ENCODE measurements at regions of chr3 and their contacts with region 1.

Region 1: DNA sequence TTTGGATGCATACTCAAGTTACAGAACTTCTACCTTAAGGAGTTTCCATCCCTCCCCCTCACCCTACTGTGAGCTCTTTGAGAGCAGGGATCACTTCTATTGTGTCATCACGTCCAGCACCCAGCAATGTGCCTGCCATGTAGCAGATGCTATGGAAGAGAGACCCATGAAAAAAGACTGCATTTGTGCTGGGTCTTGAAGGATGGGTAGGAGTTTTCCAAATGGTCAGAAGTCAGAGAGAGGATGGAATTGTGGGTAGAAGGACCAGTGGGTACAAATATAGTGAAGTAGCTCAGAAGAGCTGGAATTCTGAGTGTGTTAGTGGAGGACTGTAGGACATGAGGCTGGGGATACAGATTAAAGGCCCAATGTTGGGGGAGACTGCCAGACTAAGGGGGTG is 141.7 kb downstream of the SRGAP3 start:
- DNase-seq: no peak
- ATAC-seq: no peak
- H3K4me3 ChIP-seq: no peak overlapping the region
- H3K27ac ChIP-seq: no peak overlapping the region
- H3K4me1 ChIP-seq: no peaks in the 10 kb centered on the region
- H3K27me3 ChIP-seq: no peaks in the 10 kb centered on the region
- CTCF ChIP-seq: no peak

Region 2: GRCh38 chr3:8963137-8963869 is 144.4 kb before region 1 on chr3 and contains the start of gene RAD18:
- CTCF ChIA-PET with region 1: no interaction called
- POLR2A ChIA-PET with region 1: no interaction called
- in situ Hi-C with region 1: no loop called
- intact Hi-C with region 1: no loop called
- DNase-seq: peak; percentile 52
- ATAC-seq: peak; percentile 95
- H3K4me3 ChIP-seq: peak within 1 kb of the TSS; percentile 74 to 95
- H3K27ac ChIP-seq: peak within 1 kb of the TSS; percentile 90
- H3K4me1 ChIP-seq: peaks cover 21% of the 10 kb centered on the region
- H3K27me3 ChIP-seq: no peaks in the 10 kb centered on the region
- CTCF ChIP-seq: no peak
- total RNA-seq, gene RAD18: 13.8 TPM

Region 3: GRCh38 chr3:9064850-9065249 is 42.9 kb before region 1 on chr3:
- CTCF ChIA-PET with region 1: no interaction called
- POLR2A ChIA-PET with region 1: no interaction called
- in situ Hi-C with region 1: no loop called
- intact Hi-C with region 1: no loop called
- DNase-seq: no peak
- ATAC-seq: no peak
- H3K4me3 ChIP-seq: no peak overlapping the region
- H3K27ac ChIP-seq: no peak overlapping the region
- H3K4me1 ChIP-seq: no peaks in the 10 kb centered on the region
- H3K27me3 ChIP-seq: no peaks in the 10 kb centered on the region; the same call in 1 of the 2 replicates
- CTCF ChIP-seq: no peak

Region 4: GRCh38 chr3:9233814-9234600 is 126.3 kb after region 1 on chr3:
- CTCF ChIA-PET with region 1: no interaction called
- POLR2A ChIA-PET with region 1: no interaction called
- in situ Hi-C with region 1: no loop called
- intact Hi-C with region 1: no loop called
- DNase-seq: no peak
- ATAC-seq: no peak
- H3K4me3 ChIP-seq: no peak overlapping the region
- H3K27ac ChIP-seq: no peak overlapping the region
- H3K4me1 ChIP-seq: no peaks in the 10 kb centered on the region
- H3K27me3 ChIP-seq: no peaks in the 10 kb centered on the region; the same call in 1 of the 2 replicates
- CTCF ChIP-seq: no peak

Region 5: GRCh38 chr3:9373465-9373864 is 265.7 kb after region 1 on chr3:
- CTCF ChIA-PET with region 1: no interaction called
- POLR2A ChIA-PET with region 1: interaction called, 13 read pairs
- in situ Hi-C with region 1: no loop called
- intact Hi-C with region 1: no loop called
- DNase-seq: no peak
- ATAC-seq: no peak
- H3K4me3 ChIP-seq: no peak overlapping the region
- H3K27ac ChIP-seq: no peak overlapping the region
- H3K4me1 ChIP-seq: no peaks in the 10 kb centered on the region; the same call in 1 of the 2 replicates
- H3K27me3 ChIP-seq: no peaks in the 10 kb centered on the region
- CTCF ChIP-seq: no peak